ENCODE measurements at regions of chr2 and their contacts with region 1.

Region 1: GRCh38 chr2:96760036-96760985 is at the start of gene CNNM4:
- DNase-seq: peak; percentile 94
- ATAC-seq: peak; percentile 88
- H3K4me3 ChIP-seq: peak within 1 kb of the TSS; percentile 93
- H3K27ac ChIP-seq: peak within 1 kb of the TSS; percentile 20; the same call in 1 of the 2 replicates
- H3K4me1 ChIP-seq: peaks cover 42% of the 10 kb centered on the region
- H3K27me3 ChIP-seq: no peaks in the 10 kb centered on the region
- CTCF ChIP-seq: no peak
- total RNA-seq, gene CNNM4: 12.5 and 15.1 TPM in 2 replicates

Region 2: DNA sequence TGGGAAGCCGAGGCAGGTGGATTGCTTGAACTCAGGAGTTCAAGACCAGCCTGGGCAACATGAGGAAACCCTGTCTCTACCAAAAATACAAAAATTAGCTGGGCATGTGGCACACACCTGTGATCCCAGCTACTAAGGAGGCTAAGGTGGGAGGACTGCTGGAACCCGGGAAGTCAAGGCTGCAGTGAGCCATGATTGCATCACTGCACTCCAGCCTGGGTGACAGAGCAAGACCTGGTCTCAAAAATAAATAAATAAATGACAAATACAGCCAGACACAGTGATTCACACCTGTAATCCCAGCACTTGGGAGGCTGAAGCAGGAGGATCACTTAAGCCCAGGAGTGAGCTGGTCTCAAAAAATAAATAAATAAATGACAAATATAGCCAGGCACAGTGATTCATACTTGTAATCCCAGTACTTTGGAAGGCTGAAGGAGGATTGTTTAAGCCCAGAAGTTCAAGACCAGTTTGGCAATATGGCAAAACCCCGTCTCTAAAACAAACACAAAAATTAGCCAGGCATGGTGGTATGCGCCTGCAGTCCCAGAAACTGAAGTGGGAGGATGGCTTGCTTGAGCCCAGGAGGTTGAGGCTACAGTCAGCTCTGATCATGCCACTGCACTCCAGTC is 128.4 kb before region 1 on chr2:
- CTCF ChIA-PET with region 1: no interaction called
- POLR2A ChIA-PET with region 1: interaction called, 23 read pairs
- intact Hi-C with region 1: loop called (anchors 5 kb)
- DNase-seq: peak; percentile 90
- ATAC-seq: peak; percentile 75
- H3K4me3 ChIP-seq: no peak overlapping the region
- H3K27ac ChIP-seq: peak overlapping the region; percentile 76
- H3K4me1 ChIP-seq: peaks cover 31% of the 10 kb centered on the region
- H3K27me3 ChIP-seq: no peaks in the 10 kb centered on the region
- CTCF ChIP-seq: no peak

Region 3: GRCh38 chr2:96739633-96740428 is 20.5 kb before region 1 on chr2 and contains the start of gene LMAN2L:
- CTCF ChIA-PET with region 1: interaction called, 6 read pairs
- POLR2A ChIA-PET with region 1: no interaction called
- intact Hi-C with region 1: loop called (anchors 1 kb)
- DNase-seq: peak; percentile 98
- ATAC-seq: peak; percentile 100
- H3K4me3 ChIP-seq: peak within 1 kb of the TSS; percentile 79
- H3K27ac ChIP-seq: no peak within 1 kb of the TSS
- H3K4me1 ChIP-seq: peaks cover 17% of the 10 kb centered on the region; the same call in 1 of the 2 replicates
- H3K27me3 ChIP-seq: no peaks in the 10 kb centered on the region
- CTCF ChIP-seq: no peak
- total RNA-seq, gene LMAN2L: 27.8 and 31.4 TPM in 2 replicates

Region 4: DNA sequence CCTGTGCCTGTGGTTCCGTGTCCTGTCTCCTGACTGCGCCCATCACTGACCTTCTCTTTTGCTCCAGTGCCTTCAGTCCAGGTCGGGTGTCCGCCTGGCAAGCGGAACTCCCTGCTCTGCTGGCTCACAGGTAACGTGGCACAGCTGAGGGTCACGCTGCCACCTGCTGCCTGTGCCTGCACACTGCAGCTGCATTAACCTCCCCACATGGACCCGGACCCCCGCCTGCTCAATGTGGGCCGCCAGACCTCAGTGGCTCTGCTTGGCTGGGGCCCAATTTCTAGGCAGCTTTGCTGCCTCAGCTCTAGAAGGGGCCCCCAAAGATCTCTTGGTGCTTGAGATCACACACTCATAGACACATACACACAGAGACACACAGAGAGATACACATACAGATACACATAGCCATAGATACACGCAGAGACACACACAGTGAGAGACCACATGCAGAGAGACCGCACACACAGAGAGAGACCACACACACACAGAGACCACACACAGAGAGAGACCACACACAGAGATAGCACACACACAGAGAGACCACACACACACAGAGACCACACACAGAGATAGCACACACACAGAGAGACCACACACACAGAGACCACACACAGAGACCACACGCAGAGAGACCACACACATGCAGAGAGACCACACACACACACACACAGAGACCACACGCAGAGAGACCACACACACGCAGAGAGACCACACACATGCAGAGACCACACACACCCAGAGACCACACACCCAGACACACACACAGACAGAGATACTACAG is 40.9 kb after region 1 on chr2:
- CTCF ChIA-PET with region 1: no interaction called
- POLR2A ChIA-PET with region 1: no interaction called
- intact Hi-C with region 1: loop called (anchors 2 kb)
- DNase-seq: peak; percentile 75
- ATAC-seq: peak; percentile 96
- H3K4me3 ChIP-seq: no peak overlapping the region
- H3K27ac ChIP-seq: no peak overlapping the region
- H3K4me1 ChIP-seq: no peaks in the 10 kb centered on the region
- H3K27me3 ChIP-seq: no peaks in the 10 kb centered on the region
- CTCF ChIP-seq: peak; percentile 92

Region 5: GRCh38 chr2:96933305-96934181 is 173.2 kb after region 1 on chr2:
- CTCF ChIA-PET with region 1: no interaction called
- POLR2A ChIA-PET with region 1: no interaction called
- intact Hi-C with region 1: no loop called
- DNase-seq: no peak
- ATAC-seq: no peak
- H3K4me3 ChIP-seq: no peak overlapping the region
- H3K27ac ChIP-seq: no peak overlapping the region
- H3K4me1 ChIP-seq: peaks cover under 1% of the 10 kb centered on the region; the same call in 1 of the 2 replicates
- H3K27me3 ChIP-seq: no peaks in the 10 kb centered on the region
- CTCF ChIP-seq: no peak

Measured in PC-3 (cell line).